ENCODE measurements at regions of chr12 and their contacts with region 1.

Region 1: DNA sequence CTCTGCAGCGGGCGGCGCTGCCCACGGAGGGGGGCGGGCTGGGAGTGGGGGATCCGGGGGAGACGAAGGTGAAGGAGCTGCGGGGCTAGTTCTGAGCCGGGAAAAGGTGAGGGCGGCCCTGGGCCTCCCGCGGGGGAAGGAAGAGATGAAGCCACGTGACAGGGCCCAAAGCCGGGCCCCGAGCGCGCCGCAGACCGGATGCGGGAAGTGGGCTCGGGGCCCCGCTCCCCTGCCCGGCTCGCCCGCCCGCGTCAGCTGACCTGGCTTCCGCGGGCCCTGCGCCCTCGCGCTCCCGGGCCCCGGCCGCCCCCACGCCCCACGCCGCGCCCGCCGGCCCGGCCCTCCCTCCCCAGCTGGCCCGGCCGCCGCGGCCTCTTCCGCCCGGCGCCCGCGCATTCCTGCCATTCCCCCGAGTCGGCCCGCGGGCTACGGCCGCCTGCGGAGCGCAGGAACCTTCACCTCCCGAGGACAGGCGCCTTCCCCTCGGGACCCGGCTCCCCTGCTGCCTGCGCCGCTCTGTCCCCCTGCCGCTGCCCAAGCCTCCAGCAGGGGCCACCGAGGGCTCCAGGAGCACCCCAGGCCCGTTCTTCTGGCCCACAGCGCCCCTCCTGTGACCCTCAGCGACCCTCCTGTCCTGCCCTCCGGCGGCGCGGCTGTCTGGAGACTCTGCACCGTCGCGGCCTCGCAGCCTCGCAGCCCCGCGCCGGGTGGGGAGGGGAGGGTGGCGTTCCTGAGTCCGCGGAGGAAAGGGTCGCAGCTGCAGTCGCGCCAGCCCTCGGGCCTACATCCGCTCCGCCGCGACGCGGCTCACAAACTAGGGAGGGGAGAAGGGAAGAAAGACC is 20.4 kb downstream of the NINJ2 start:
- DNase-seq: no peak
- H3K4me3 ChIP-seq: peak overlapping the region; percentile 65 to 88 (median 74)
- H3K27ac ChIP-seq: peak overlapping the region; percentile 98 to 100 (median 98)
- H3K4me1 ChIP-seq: peaks cover 38 to 95% (median 55%) of the 10 kb centered on the region in 3 donors
- H3K27me3 ChIP-seq: no peaks in the 10 kb centered on the region
- CTCF ChIP-seq: peak in 4 of 6 experiments; percentile 17 to 53 (median 42)
- POLR2A ChIP-seq: peak in 2 of 4 donors; percentile 48 to 60

Region 2: GRCh38 chr12:575948-576612 is 66.8 kb before region 1 on chr12:
- intact Hi-C with region 1: loop called (anchors 10 kb)
- DNase-seq: no peak
- H3K4me3 ChIP-seq: peak overlapping the region in 2 of 4 donors; percentile 17 to 52
- H3K27ac ChIP-seq: peak overlapping the region; percentile 85 to 96 (median 92)
- H3K4me1 ChIP-seq: peaks cover 29 to 87% (median 39%) of the 10 kb centered on the region in 3 donors
- H3K27me3 ChIP-seq: no peaks in the 10 kb centered on the region
- CTCF ChIP-seq: peak; percentile 98 to 100 (median 100)
- POLR2A ChIP-seq: peak in 1 of 4 donors; percentile 21